Panc1 (cell line): ENCODE measurements at regions of chr4 and their contacts with region 1.

Region 1: GRCh38 chr4:150814873-150815272 is 200.2 kb downstream of the LRBA start:
- DNase-seq: no peak
- ATAC-seq: no peak
- H3K4me3 ChIP-seq: no peak overlapping the region
- H3K27ac ChIP-seq: no peak overlapping the region
- H3K4me1 ChIP-seq: no peaks in the 10 kb centered on the region
- H3K27me3 ChIP-seq: no peaks in the 10 kb centered on the region
- CTCF ChIP-seq: no peak

Region 2: GRCh38 chr4:150647008-150647407 is 167.9 kb before region 1 on chr4:
- CTCF ChIA-PET with region 1: no interaction called
- POLR2A ChIA-PET with region 1: no interaction called
- in situ Hi-C with region 1: no loop called
- intact Hi-C with region 1: no loop called
- DNase-seq: no peak
- ATAC-seq: no peak
- H3K4me3 ChIP-seq: no peak overlapping the region
- H3K27ac ChIP-seq: no peak overlapping the region
- H3K4me1 ChIP-seq: no peaks in the 10 kb centered on the region
- H3K27me3 ChIP-seq: no peaks in the 10 kb centered on the region
- CTCF ChIP-seq: no peak

Region 3: DNA sequence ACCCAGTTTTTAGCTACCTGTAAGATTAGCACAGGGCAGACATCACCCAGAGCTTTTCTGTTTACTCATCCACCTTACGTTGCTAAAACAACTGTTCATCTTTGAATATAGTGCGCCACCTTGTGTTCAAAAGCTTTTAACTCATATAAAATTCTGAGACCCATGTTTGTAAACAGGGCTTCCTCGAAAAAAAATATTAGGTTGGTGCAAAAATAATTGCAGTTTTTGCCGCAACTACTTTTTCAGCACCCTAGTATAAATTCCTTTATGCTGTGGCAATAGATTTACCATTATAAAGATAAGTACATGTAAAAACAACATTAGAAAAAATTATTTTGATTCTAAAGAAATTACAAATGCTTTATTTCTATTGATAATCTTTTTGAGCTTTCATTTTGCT is 52.3 kb after region 1 on chr4:
- CTCF ChIA-PET with region 1: interaction called, 12 read pairs
- POLR2A ChIA-PET with region 1: no interaction called
- in situ Hi-C with region 1: no loop called
- intact Hi-C with region 1: no loop called
- DNase-seq: no peak
- ATAC-seq: peak; percentile 80
- H3K4me3 ChIP-seq: no peak overlapping the region
- H3K27ac ChIP-seq: no peak overlapping the region
- H3K4me1 ChIP-seq: no peaks in the 10 kb centered on the region; the same call in 1 of the 2 replicates
- H3K27me3 ChIP-seq: no peaks in the 10 kb centered on the region
- CTCF ChIP-seq: peak; percentile 52; the same call in 1 of the 2 replicates